ENCODE measurements at regions of chr9 and their contacts with region 1.

Region 1: GRCh38 chr9:74952281-74953151 is at the start of gene C9orf40:
- DNase-seq: peak; percentile 92
- ATAC-seq: peak; percentile 92
- H3K4me3 Mint-ChIP-seq: peak within 1 kb of the TSS; percentile 98
- H3K27ac Mint-ChIP-seq: peak within 1 kb of the TSS; percentile 97
- H3K4me1 Mint-ChIP-seq: peaks cover 40% of the 10 kb centered on the region
- H3K27me3 Mint-ChIP-seq: no peaks in the 10 kb centered on the region
- total RNA-seq, gene C9orf40: 22.9 TPM

Region 2: GRCh38 chr9:75001719-75002422 is 49.4 kb after region 1 on chr9:
- CTCF ChIA-PET with region 1: interaction called, 17 read pairs
- POLR2A ChIA-PET with region 1: interaction called, 4 read pairs
- DNase-seq: peak; percentile 30
- ATAC-seq: peak; percentile 93
- H3K4me3 Mint-ChIP-seq: no peak overlapping the region
- H3K27ac Mint-ChIP-seq: no peak overlapping the region
- H3K4me1 Mint-ChIP-seq: no peaks in the 10 kb centered on the region
- H3K27me3 Mint-ChIP-seq: no peaks in the 10 kb centered on the region

Region 3: DNA sequence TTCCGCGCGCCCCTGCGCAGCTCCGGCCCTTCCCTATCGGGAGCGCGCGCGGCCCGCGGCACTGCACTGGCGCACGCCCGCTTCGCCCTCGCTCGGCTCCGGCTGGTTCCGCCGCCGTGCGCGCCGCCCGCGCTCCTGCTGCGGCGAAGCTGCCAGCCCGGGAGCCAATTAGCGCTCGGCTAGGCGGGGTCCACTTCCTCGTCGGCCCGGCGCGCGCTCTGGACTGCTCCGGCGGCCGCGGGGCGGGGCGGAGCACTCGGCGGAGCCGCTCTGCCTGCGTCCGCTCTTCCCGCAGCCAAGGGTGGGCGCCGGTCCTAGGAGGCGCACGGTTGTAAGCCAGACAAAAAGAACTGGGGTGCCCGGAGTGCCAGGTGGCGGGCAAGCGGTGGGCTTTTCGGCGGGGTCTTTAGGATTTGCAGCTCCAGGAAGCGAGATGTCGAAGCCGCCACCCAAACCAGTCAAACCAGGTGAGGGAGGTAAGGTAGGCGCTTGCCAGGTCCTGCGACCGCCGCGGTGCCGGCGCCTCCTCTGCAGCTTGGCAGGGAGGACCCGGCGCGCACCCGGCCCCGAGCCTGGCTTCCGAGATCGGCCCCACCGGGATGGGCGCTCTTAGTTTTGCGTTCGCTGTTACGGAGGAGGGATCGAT is 135.9 kb after region 1 on chr9 and contains the start of gene OSTF1:
- CTCF ChIA-PET with region 1: interaction called, 7 read pairs
- POLR2A ChIA-PET with region 1: interaction called, 12 read pairs
- DNase-seq: peak; percentile 94
- ATAC-seq: peak; percentile 92
- H3K4me3 Mint-ChIP-seq: peak within 1 kb of the TSS; percentile 95
- H3K27ac Mint-ChIP-seq: peak within 1 kb of the TSS; percentile 97
- H3K4me1 Mint-ChIP-seq: peaks cover 62% of the 10 kb centered on the region
- H3K27me3 Mint-ChIP-seq: no peaks in the 10 kb centered on the region
- total RNA-seq, gene OSTF1: 126 to 132 TPM

Measured in activated CD8-positive, alpha-beta T cell treated with anti-CD3 and anti-CD28 coated beads, Interleukin-2, amount 10 ng/mL, durations not matched to agents 7 days and 5 days (primary cell).